Activated CD4-positive, alpha-beta T cell treated with anti-CD3 and anti-CD28 coated beads, Interleukin-2, amount 10 ng/mL, durations not matched to agents 7 days and 5 days (primary cell): ENCODE measurements at regions of chr14 and their contacts with region 1.

Region 1: GRCh38 chr14:98919434-98919833 is 352.6 kb downstream of the BCL11B start:
- DNase-seq: no peak
- H3K4me3 Mint-ChIP-seq: no peak overlapping the region
- H3K27ac Mint-ChIP-seq: no peak overlapping the region
- H3K4me1 Mint-ChIP-seq: peaks cover 7% of the 10 kb centered on the region
- H3K27me3 Mint-ChIP-seq: no peaks in the 10 kb centered on the region

Region 2: GRCh38 chr14:98931911-98932310 is 12.5 kb after region 1 on chr14:
- CTCF ChIA-PET with region 1: interaction called, 12 read pairs
- POLR2A ChIA-PET with region 1: no interaction called
- DNase-seq: peak; percentile 87
- H3K4me3 Mint-ChIP-seq: peak overlapping the region; percentile 63
- H3K27ac Mint-ChIP-seq: peak overlapping the region; percentile 95
- H3K4me1 Mint-ChIP-seq: peaks cover 68% of the 10 kb centered on the region
- H3K27me3 Mint-ChIP-seq: no peaks in the 10 kb centered on the region